Activated CD8-positive, alpha-beta memory T cell treated with anti-CD3 and anti-CD28 coated beads, Interleukin-2, amount 10 ng/mL, durations not matched to agents 7 days and 5 days (primary cell): ENCODE measurements at regions of chr20 and their contacts with region 1.

Region 1: GRCh38 chr20:53216856-53217576 is 244.9 kb downstream of the TSHZ2 start:
- DNase-seq: peak; percentile 78
- ATAC-seq: peak; percentile 84
- H3K4me3 Mint-ChIP-seq: no peak overlapping the region
- H3K27ac Mint-ChIP-seq: no peak overlapping the region
- H3K4me1 Mint-ChIP-seq: peaks cover 24% of the 10 kb centered on the region
- H3K27me3 Mint-ChIP-seq: peaks cover 19% of the 10 kb centered on the region

Region 2: GRCh38 chr20:52312132-52312729 is 904.8 kb before region 1 on chr20:
- CTCF ChIA-PET with region 1: interaction called, 11 read pairs
- DNase-seq: peak; percentile 62
- ATAC-seq: peak; percentile 53
- H3K4me3 Mint-ChIP-seq: no peak overlapping the region
- H3K27ac Mint-ChIP-seq: no peak overlapping the region
- H3K4me1 Mint-ChIP-seq: peaks cover 5% of the 10 kb centered on the region
- H3K27me3 Mint-ChIP-seq: peaks cover 3% of the 10 kb centered on the region

Region 3: DNA sequence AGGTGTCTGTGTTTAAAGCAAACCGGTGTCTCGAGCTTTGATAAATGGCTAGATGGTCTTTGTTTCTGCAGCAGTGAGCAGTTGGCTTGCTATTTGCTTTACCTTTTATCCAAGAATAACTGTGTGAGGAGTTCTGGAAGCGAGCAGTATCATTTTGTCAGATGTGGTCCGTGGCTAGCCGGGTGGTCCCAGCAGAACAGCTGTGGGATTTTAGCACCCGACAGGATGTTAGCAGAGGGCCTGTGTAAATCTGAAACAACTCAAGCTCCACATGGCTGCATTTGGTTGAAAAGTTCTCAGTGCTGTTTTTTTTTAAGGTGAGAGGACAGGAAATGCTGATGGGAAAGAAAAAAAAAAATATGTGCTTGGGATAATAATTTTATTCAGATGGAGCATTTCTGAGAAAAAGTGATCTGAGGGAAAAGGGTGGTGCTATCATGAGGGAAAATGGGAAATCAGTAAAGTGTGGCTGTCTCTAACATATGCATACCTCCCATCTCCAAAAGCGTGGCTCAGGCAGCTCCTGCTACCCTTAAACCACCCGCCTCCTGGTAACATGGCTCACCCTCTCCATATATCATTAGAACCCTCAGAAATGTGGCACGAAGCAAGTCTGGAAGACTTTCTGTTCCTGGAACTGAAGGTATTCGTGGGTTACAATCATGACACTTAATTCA is 29.5 kb before region 1 on chr20:
- CTCF ChIA-PET with region 1: interaction called, 10 read pairs
- DNase-seq: no peak
- ATAC-seq: no peak
- H3K4me3 Mint-ChIP-seq: no peak overlapping the region
- H3K27ac Mint-ChIP-seq: no peak overlapping the region
- H3K4me1 Mint-ChIP-seq: no peaks in the 10 kb centered on the region
- H3K27me3 Mint-ChIP-seq: peaks cover 33% of the 10 kb centered on the region

Region 4: GRCh38 chr20:53316221-53316937 is 99.4 kb after region 1 on chr20:
- CTCF ChIA-PET with region 1: no interaction called
- DNase-seq: no peak
- ATAC-seq: no peak
- H3K4me3 Mint-ChIP-seq: no peak overlapping the region
- H3K27ac Mint-ChIP-seq: no peak overlapping the region
- H3K4me1 Mint-ChIP-seq: peaks cover 1% of the 10 kb centered on the region
- H3K27me3 Mint-ChIP-seq: peaks cover 4% of the 10 kb centered on the region